Colonic mucosa (tissue), 4 donors: ENCODE measurements at regions of chr11 and their contacts with region 1.

Region 1: DNA sequence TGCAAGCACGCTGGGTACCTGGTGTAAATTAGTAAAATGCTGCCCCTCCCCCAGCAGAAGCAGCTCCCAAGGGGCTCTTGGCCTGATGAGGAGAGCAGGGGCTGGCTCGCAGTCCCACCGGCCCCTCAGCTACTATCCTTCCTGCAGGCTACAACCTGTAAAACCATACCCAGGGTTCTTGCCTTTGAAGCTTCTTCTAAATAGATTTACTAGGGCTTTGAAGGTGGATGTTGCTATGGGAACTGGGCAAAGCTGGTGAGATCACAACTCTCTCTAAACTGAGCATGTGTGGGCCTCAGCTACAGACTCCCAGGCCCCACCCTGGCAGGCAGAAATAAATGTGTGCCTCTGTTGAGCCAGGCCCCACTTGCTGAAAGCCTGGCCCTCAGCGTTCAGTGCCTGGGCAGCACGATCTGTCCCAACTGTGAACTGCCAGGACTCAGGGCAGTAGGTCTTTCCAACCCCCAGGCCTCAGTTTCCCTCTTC is 18.5 kb downstream of the CD5 start:
- DNase-seq: no peak
- H3K4me3 ChIP-seq: no peak overlapping the region
- H3K27ac ChIP-seq: no peak overlapping the region
- H3K4me1 ChIP-seq: no peaks in the 10 kb centered on the region
- H3K27me3 ChIP-seq: no peaks in the 10 kb centered on the region
- CTCF ChIP-seq: no peak

Region 2: DNA sequence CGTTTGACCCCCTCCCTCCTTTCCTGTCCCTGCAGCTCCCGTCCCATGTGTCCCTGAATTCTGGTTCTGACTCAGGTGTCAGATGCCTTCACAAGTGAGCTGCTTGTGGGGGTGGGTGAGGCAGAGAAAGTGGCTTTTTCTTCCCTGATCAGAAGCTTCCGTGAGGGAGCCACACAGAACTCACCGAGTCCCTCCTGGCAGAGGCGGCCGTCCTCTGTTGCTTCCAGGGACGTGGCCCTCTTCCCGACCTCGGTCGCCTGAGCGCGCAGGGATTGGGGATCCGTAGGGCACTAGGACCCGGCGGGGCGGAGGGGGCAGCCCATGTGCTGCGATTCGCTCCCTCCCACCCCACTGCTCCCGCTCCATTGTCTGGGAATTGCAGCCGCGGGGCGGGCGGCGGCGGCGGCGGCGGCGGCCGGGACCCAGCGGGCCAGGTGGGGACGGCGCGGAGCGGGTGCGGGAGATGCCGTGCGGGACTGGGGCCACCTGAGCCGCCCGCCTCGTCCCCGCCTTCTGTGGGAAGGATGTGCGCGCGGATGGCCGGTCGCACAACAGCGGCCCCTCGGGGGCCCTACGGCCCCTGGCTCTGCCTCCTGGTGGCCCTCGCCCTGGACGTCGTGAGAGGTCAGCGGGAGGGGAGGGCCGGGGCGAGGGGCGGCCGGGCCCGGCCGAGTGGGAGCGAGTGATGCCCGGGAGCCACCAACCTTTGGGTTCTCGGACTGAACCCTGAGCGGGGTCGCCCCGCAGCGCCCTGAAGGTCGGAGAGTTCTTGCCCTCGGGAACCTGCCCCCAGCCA is 196.4 kb before region 1 on chr11 and contains the start of gene TMEM132A:
- intact Hi-C with region 1: loop called (anchors 5 kb)
- DNase-seq: peak; percentile 83
- H3K4me3 ChIP-seq: peak within 1 kb of the TSS; percentile 65
- H3K27ac ChIP-seq: no peak within 1 kb of the TSS
- H3K4me1 ChIP-seq: no peaks in the 10 kb centered on the region
- H3K27me3 ChIP-seq: peaks cover 11% of the 10 kb centered on the region
- CTCF ChIP-seq: no peak
- total RNA-seq, gene TMEM132A: 12.3 to 20.7 TPM